Activated T-helper 1 cell treated with anti-CD3 and anti-CD28 coated beads, Interleukin-12 subunit alpha, Interleukin-12 subunit beta, Interleukin-2, Interleukin-4 antibody, amounts not matched to agents 30 ng/mL and 10 ng/mL and 1 ng/mL, durations not matched to agents 14 hours and 24 hours and 36 hours (primary cell): ENCODE measurements at regions of chr2 and their contacts with region 1.

Region 1: GRCh38 chr2:169109502-169110409 is 40.4 kb downstream of the DHRS9 start:
- DNase-seq: peak; percentile 58
- H3K4me3 Mint-ChIP-seq: no peak overlapping the region
- H3K27ac Mint-ChIP-seq: no peak overlapping the region
- H3K4me1 Mint-ChIP-seq: peaks cover 52% of the 10 kb centered on the region
- H3K27me3 Mint-ChIP-seq: peaks cover 3% of the 10 kb centered on the region

Region 2: GRCh38 chr2:168961450-168962229 is 148.1 kb before region 1 on chr2:
- intact Hi-C with region 1: loop called (anchors 1 kb)
- DNase-seq: peak; percentile 30
- H3K4me3 Mint-ChIP-seq: no peak overlapping the region
- H3K27ac Mint-ChIP-seq: no peak overlapping the region
- H3K4me1 Mint-ChIP-seq: peaks cover 16% of the 10 kb centered on the region
- H3K27me3 Mint-ChIP-seq: peaks cover 8% of the 10 kb centered on the region

Region 3: GRCh38 chr2:169072163-169072925 is 37.4 kb before region 1 on chr2:
- intact Hi-C with region 1: loop called (anchors 5 kb)
- DNase-seq: no peak
- H3K4me3 Mint-ChIP-seq: peak overlapping the region; percentile 29
- H3K27ac Mint-ChIP-seq: peak overlapping the region; percentile 54
- H3K4me1 Mint-ChIP-seq: peaks cover 44% of the 10 kb centered on the region
- H3K27me3 Mint-ChIP-seq: no peaks in the 10 kb centered on the region

Region 4: GRCh38 chr2:169131587-169132512 is 22.1 kb after region 1 on chr2:
- intact Hi-C with region 1: loop called (anchors 1 kb)
- DNase-seq: no peak
- H3K4me3 Mint-ChIP-seq: no peak overlapping the region
- H3K27ac Mint-ChIP-seq: no peak overlapping the region
- H3K4me1 Mint-ChIP-seq: no peaks in the 10 kb centered on the region
- H3K27me3 Mint-ChIP-seq: peaks cover 3% of the 10 kb centered on the region

Region 5: DNA sequence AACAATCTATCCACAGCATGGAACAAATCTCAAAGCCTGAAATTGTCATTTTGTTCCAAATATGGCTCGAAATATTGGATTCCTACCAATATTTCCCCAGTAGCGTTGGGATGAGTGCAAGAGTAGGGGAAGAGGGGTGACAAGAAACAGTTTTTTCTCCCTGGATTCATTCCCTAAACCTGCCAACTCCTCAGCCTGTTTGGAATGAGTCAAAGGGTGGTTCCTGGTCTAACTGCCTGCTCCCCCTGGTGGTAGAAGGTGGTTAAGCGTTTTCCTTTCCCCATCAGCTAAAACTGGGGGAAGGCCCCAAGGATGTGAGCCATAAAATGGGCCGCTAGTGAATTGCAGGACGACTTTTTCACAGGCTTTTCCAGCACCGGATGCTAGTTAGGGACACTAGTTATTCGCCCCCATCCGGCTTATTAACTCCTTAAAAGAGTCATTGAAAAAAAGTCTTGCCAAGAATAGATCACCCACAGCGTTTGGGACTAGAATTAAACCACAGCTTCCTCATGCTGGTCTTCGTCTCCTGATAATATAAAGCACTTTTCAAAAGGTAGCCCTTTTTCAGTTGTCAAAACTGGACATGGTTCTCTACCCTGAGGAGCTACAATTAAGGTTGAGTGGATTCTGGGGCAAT is 32.1 kb after region 1 on chr2:
- intact Hi-C with region 1: loop called (anchors 1 kb)
- DNase-seq: peak; percentile 30
- H3K4me3 Mint-ChIP-seq: no peak overlapping the region
- H3K27ac Mint-ChIP-seq: no peak overlapping the region
- H3K4me1 Mint-ChIP-seq: no peaks in the 10 kb centered on the region
- H3K27me3 Mint-ChIP-seq: peaks cover 5% of the 10 kb centered on the region

Region 6: DNA sequence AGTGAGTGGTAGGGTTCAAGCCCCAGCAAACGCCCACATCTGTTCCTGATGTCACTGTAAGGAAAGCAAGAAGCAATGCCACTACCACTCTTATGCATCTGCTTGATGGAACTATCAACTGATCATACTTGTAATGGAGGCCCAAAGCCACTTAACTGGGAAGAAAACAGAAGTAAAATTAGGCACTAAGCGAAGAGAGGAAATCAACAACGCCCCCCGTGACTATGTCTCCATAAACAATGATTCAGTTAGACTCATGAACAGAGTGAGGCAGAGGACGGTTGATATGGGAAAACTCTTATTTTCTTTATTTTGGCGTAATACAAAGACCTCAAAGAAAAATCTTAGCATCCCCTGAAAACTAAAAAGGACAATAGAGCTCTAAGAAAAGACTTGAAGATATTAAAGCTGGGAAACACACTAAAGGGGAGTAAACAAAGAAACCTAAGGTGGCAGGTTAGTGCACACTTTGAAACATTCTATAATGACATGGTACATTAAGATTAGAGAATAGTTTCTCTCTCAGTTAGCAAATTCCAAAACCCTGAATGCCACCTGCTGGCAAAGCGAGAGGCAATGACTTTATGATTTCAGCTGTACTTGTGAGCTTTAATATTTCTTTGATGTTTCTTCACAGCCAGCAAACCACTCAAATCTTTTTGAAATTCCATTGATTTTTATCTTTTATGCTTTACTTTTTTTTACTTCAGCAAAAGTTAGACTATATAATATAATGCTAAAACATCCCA is 166.1 kb after region 1 on chr2:
- intact Hi-C with region 1: loop called (anchors 5 kb)
- DNase-seq: no peak
- H3K4me3 Mint-ChIP-seq: no peak overlapping the region
- H3K27ac Mint-ChIP-seq: no peak overlapping the region
- H3K4me1 Mint-ChIP-seq: no peaks in the 10 kb centered on the region
- H3K27me3 Mint-ChIP-seq: peaks cover 7% of the 10 kb centered on the region

Region 7: DNA sequence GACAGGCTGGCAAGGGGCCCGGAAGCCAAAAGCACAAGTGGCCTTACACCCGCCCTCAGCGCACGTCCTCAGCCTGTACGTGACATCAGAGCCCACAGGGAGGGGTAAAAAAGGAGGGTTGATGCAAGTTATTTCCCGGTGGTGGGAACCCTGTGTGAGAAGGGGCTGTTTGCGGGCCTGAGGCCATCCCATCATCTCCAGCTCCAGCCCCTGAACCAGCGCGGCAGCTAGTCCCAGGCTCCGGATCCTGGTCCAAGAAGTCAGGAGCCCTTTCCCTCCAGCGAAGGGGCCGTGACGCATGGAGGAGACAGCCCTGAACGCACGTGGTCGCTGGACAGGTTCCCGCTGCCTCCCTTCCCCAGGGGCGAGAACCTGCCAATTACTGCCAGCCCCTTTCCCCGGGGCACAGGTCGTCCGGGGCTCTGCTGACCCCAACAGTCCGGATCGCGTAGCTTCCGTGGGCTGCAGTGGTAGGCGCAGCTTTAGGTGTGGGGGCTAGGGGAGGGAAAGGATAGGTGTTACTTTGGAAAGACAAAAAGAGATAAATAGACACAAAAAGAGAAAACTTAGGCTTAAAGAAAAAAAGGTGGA is 253.9 kb after region 1 on chr2:
- intact Hi-C with region 1: loop called (anchors 5 kb)
- DNase-seq: peak; percentile 41
- H3K4me3 Mint-ChIP-seq: peak overlapping the region; percentile 88
- H3K27ac Mint-ChIP-seq: peak overlapping the region; percentile 75
- H3K4me1 Mint-ChIP-seq: peaks cover 31% of the 10 kb centered on the region
- H3K27me3 Mint-ChIP-seq: peaks cover 46% of the 10 kb centered on the region